ENCODE measurements at regions of chr4 and their contacts with region 1.

Region 1: GRCh38 chr4:25312496-25313200 is at the start of gene ZCCHC4:
- DNase-seq: peak; percentile 94
- H3K4me3 ChIP-seq: peak within 1 kb of the TSS; percentile 79 to 80
- H3K27ac ChIP-seq: peak within 1 kb of the TSS; percentile 75 to 77
- H3K4me1 ChIP-seq: peaks cover 3 to 5% of the 10 kb centered on the region in 2 experiments; a peak in 2 of 4 replicates
- H3K27me3 ChIP-seq: no peaks in the 10 kb centered on the region
- CTCF ChIP-seq: peak; percentile 99
- EP300 ChIP-seq: peak in 1 of 2 experiments; percentile 61; a peak in 1 of 4 replicates
- RAD21 ChIP-seq: peak; percentile 25
- polyA plus RNA-seq, gene ZCCHC4: 4.8 and 7.5 TPM in 2 replicates

Region 2: DNA sequence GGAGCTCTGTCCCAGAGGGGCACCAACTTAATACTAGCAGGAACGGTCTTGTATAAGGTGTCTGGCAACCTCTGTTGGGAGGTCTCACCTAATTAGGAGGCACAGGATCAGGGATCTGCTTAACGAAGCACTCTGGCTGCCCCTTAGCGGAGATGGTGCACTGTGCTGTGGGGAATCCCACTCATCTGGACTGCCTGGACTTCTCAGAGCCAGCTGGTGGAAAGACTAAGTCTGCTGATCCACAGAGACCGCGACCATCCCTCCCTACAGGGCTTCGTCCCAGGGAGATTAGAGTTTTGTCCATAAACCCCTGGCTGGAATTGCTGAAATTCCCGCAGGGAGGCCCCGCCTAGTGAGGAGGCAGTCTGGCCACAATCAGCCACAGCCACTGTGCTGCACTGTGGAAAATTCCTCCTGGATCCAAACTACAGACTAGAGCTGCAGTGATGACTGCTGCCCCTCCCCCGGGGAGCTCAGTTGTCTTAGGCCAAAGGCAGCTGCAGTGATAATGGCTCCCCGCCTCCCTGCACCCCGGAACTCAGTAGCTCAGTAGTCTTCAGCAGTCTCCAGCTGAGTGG is 22.1 kb before region 1 on chr4:
- CTCF ChIA-PET with region 1: interaction called, 43 read pairs
- POLR2A ChIA-PET with region 1: no interaction called
- DNase-seq: no peak
- H3K4me3 ChIP-seq: no peak overlapping the region
- H3K27ac ChIP-seq: no peak overlapping the region
- H3K4me1 ChIP-seq: no peaks in the 10 kb centered on the region
- H3K27me3 ChIP-seq: no peaks in the 10 kb centered on the region; the same call in 1 of the 2 replicates
- CTCF ChIP-seq: no peak
- EP300 ChIP-seq: no peak
- RAD21 ChIP-seq: no peak

Region 3: DNA sequence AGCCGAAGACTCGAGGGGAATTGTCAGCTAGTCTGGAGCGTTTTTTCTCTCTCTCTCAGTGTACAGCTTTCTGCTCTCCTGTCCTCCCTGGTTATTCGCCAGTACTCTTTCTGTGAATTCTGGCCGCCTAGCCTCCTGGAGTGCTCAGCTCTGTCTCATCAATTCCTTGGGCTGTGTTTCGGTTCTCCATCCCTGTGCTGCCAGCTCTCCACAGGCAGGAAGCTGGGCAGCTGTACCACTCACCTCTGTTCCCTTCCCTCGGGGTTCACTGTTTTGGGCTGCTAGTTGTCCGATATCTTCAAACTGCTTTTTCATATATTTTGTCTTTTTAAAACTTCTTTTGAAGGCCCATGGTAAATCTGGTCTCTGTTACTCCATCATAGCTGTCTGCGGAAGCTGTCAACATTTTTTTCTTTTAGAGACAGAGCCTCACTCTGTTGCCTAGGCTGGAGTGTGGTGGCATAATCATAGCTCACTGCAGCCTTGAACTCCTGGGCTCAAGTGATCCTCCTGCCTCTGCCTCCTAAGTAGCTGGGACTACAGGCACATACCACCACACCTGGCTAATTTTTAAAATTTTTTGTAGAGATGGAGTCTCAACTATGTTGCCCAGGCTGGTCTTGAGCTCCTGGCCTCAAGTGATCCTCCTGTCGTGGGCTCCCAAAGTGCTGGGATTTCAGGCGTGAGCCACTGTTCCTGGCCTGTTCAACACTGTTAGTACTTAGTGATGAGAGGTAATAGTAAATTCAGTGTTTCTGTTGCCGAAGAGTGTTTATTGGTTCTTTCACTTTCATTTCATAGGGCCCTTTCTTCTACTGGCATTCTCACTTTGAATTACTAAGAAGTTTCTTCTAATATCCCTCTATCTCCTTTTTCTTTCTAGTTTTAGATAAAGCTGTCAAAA is 18.5 kb after region 1 on chr4:
- CTCF ChIA-PET with region 1: interaction called, 11 read pairs
- POLR2A ChIA-PET with region 1: no interaction called
- DNase-seq: no peak
- H3K4me3 ChIP-seq: no peak overlapping the region
- H3K27ac ChIP-seq: no peak overlapping the region
- H3K4me1 ChIP-seq: no peaks in the 10 kb centered on the region; a peak in 1 of 4 replicates
- H3K27me3 ChIP-seq: no peaks in the 10 kb centered on the region
- CTCF ChIP-seq: no peak
- EP300 ChIP-seq: no peak
- RAD21 ChIP-seq: no peak

Region 4: GRCh38 chr4:25367004-25367621 is 54.5 kb after region 1 on chr4:
- CTCF ChIA-PET with region 1: interaction called, 34 read pairs
- POLR2A ChIA-PET with region 1: no interaction called
- DNase-seq: peak; percentile 19
- H3K4me3 ChIP-seq: no peak overlapping the region; a peak in 1 of 4 replicates
- H3K27ac ChIP-seq: no peak overlapping the region
- H3K4me1 ChIP-seq: no peaks in the 10 kb centered on the region
- H3K27me3 ChIP-seq: no peaks in the 10 kb centered on the region
- CTCF ChIP-seq: peak; percentile 91
- EP300 ChIP-seq: no peak
- RAD21 ChIP-seq: peak; percentile 75